Right ventricle myocardium inferior (tissue), 1 donor: ENCODE measurements at regions of chr15 and their contacts with region 1.

Region 1: DNA sequence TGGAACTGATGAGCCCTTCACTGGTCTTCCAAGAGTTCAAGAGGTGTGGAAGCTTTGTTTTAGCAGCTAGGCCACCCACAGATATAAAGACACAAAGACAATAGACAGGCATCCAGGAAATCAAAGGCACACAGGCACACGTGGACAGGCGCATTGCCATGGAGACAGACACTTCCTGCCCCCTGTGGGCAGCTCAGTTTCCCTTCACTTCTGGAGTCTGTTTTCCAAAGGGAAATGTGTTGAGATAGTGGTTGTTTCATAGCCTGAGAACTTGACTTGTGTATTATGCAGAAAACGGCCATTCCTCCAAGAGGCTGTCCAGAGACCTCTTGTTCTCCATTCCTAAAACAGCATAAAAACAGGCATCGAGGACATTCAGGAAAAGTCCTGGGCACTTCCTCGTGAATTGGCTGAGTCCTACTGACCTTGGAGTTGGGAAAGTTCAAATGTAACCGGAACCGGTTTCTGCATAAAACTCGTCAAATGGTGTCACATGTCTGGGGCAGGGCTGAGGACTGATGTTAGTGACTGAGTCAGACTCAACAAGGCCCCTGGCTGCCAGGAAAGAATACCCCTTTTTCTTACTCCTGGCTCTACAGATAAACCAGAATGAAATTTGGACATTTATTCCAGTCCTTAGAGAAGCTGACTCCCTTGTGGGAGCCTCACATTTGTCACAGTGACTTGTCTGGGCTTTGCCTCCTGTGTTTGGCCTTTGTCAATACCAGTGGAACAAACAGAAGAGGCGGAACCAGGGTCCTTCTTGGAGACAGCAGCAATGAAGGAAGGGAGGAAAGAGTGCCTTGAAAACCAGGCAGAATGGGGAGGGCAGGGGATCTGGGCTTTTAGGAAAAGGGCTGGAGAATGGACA is 1.3 kb downstream of the ALPK3 start:
- DNase-seq: no peak
- ATAC-seq: no peak

Region 2: GRCh38 chr15:84748274-84749110 is 70.0 kb before region 1 on chr15 and contains the start of gene ZNF592:
- intact Hi-C with region 1: loop called (anchors 1 kb)
- DNase-seq: peak; percentile 92
- ATAC-seq: peak; percentile 85
- total RNA-seq, gene ZNF592: 19.2 TPM

Region 3: GRCh38 chr15:84833447-84834228 is 15.1 kb after region 1 on chr15:
- intact Hi-C with region 1: loop called (anchors 2 kb)
- DNase-seq: no peak
- ATAC-seq: no peak